ENCODE measurements at regions of chr10 and their contacts with region 1.

Region 1: DNA sequence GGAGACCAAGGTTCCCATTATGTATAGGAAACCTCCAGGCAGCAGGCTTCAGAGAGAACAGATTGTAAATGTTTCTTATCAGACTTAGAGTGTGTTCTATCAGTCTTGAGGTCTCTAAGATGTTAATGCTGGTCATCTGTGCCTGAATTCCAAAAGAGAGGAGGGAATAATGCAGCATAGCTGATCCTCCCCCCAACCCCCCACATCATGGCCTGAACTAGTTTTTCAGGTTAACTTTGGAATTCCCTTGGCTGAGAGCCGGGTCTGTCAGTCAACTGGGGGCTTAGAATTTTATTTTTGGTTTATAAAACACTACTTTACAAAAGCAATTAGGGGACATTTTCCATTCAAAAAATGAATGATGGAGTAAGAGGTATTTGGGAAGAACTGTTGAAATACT is 184.3 kb downstream of the NEBL start:
- DNase-seq: no peak
- H3K4me3 ChIP-seq: no peak overlapping the region
- H3K27ac ChIP-seq: no peak overlapping the region
- H3K4me1 ChIP-seq: peaks cover 0 to 27% (median 0%) of the 10 kb centered on the region in 4 donors
- H3K27me3 ChIP-seq: no peaks in the 10 kb centered on the region
- CTCF ChIP-seq: no peak

Region 2: DNA sequence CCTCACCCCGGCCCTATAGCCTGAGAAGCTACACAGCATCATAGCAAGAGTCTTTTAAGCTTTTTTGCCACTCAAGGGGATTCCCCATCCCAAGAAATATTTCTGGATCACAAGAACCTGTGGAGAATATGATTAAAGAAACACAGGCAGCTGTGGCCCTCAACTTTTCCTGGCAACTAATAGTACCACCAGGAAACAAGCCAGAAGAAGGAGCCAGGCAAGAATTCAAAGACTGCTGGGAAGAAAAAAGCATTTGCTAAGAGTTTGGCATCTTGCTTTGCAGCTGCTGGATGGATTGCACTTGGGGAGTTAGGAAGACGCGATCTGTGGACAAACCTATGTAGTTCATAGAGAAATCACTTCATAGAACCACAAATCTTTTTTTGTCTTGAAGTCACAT is 458.7 kb before region 1 on chr10:
- intact Hi-C with region 1: loop called (anchors 10 kb)
- DNase-seq: no peak
- H3K4me3 ChIP-seq: no peak overlapping the region
- H3K27ac ChIP-seq: peak overlapping the region in 1 of 2 donors; percentile 25
- H3K4me1 ChIP-seq: peaks cover 0 to 16% (median 7%) of the 10 kb centered on the region in 4 donors
- H3K27me3 ChIP-seq: no peaks in the 10 kb centered on the region
- CTCF ChIP-seq: no peak

Region 3: GRCh38 chr10:20535897-20536881 is 176.6 kb before region 1 on chr10:
- intact Hi-C with region 1: no loop called
- DNase-seq: no peak
- H3K4me3 ChIP-seq: no peak overlapping the region
- H3K27ac ChIP-seq: no peak overlapping the region
- H3K4me1 ChIP-seq: peaks cover 0 to 3% (median 0%) of the 10 kb centered on the region in 4 donors
- H3K27me3 ChIP-seq: no peaks in the 10 kb centered on the region
- CTCF ChIP-seq: no peak

Region 4: DNA sequence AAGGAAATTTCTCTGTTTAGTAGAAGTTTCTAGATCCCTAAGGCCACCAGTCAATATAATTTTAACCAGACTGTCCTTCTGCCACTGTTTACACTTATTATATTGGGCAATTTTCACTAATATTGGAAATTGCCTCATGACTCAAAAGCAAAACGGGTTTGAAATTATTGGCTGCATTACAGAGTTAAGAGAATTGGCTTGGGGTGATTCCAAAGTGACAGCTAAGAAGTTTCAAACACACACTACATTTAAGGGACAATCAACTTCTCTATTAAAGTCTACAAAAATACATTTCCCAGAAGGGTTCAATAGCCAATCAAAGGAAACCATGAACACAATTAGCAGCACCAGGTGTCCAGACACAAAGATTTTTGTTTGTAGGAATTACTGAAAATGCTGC is 72.4 kb after region 1 on chr10:
- intact Hi-C with region 1: no loop called
- DNase-seq: no peak
- H3K4me3 ChIP-seq: no peak overlapping the region
- H3K27ac ChIP-seq: no peak overlapping the region
- H3K4me1 ChIP-seq: no peaks in the 10 kb centered on the region
- H3K27me3 ChIP-seq: no peaks in the 10 kb centered on the region
- CTCF ChIP-seq: no peak

Region 5: GRCh38 chr10:20858292-20859124 is 145.7 kb after region 1 on chr10:
- intact Hi-C with region 1: no loop called
- DNase-seq: no peak
- H3K4me3 ChIP-seq: no peak overlapping the region
- H3K27ac ChIP-seq: no peak overlapping the region
- H3K4me1 ChIP-seq: no peaks in the 10 kb centered on the region
- H3K27me3 ChIP-seq: no peaks in the 10 kb centered on the region
- CTCF ChIP-seq: peak; percentile 32 to 37

Measured in tibial artery (tissue), 4 donors.